ENCODE measurements at regions of chr11 and their contacts with region 1.

Region 1: GRCh38 chr11:83257761-83258168 is 28.4 kb downstream of the CCDC90B start:
- DNase-seq: peak; percentile 66
- H3K4me3 ChIP-seq: no peak overlapping the region
- H3K27ac ChIP-seq: peak overlapping the region; percentile 34
- H3K4me1 ChIP-seq: peaks cover 14% of the 10 kb centered on the region
- H3K27me3 ChIP-seq: no peaks in the 10 kb centered on the region
- CTCF ChIP-seq: no peak
- POLR2A ChIP-seq: no peak

Region 2: DNA sequence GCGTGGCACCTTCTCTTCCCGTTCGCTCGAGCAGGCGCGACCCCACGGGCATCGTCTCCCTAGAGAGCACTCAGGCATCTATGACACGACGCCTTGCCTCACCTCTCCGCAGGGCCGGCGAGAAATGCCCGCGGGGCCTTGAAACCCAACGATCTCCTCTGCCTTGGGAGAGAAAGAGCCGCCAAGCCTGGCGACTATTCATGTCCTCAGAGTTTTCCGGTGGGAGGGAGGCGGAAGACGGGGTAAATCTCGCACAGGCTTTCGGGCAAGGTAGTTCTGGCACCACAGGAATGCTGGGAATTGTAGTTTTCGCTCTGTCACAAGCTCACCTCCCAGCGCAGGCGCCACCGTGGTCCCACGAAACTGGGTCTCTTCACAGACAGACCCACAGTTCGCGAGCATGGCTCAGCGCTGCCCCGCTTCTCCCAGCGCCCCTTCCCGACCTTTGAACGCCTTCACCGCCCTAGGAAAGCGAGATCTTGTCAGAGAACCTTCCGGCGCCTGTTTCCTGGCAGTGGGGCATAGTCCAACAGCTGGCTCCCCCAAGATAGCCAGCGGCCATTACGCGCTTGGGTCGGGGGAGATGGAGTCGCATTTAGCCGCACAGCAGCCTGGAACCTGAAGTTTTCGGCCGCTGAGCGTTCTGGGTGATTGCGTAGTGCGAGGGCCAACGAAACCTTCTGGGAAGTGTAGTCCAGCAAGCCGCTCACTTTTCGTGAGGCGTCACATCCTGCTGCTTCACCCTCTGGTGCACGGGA is 28.2 kb after region 1 on chr11 and contains the start of gene CCDC90B:
- CTCF ChIA-PET with region 1: interaction called, 4 read pairs
- POLR2A ChIA-PET with region 1: no interaction called
- dilution Hi-C with region 1: no loop called
- intact Hi-C with region 1: loop called (anchors 1 kb)
- DNase-seq: peak; percentile 98
- H3K4me3 ChIP-seq: peak within 1 kb of the TSS; percentile 47 to 100 (median 85)
- H3K27ac ChIP-seq: peak within 1 kb of the TSS; percentile 86
- H3K4me1 ChIP-seq: peaks cover 9% of the 10 kb centered on the region
- H3K27me3 ChIP-seq: peaks cover 0 to under 1% of the 10 kb centered on the region in 2 experiments
- CTCF ChIP-seq: peak; percentile 17 to 24
- POLR2A ChIP-seq: peak; percentile 92
- total RNA-seq, gene CCDC90B: 45.8 and 49.6 TPM in 2 replicates

Measured in endothelial cell of umbilical vein (primary cell).